ENCODE measurements at regions of chr1 and their contacts with region 1.

Region 1: GRCh38 chr1:229625915-229626831 is at the starts of genes TAF5L and URB2:
- DNase-seq: peak; percentile 78 to 87
- H3K4me3 ChIP-seq: peak within 1 kb of the TSS; percentile 81 to 97
- H3K27ac ChIP-seq: peak within 1 kb of the TSS; percentile 94 to 96
- H3K4me1 ChIP-seq: peaks cover 9 to 15% of the 10 kb centered on the region in 2 donors
- H3K27me3 ChIP-seq: no peaks in the 10 kb centered on the region
- CTCF ChIP-seq: peak in 2 of 4 experiments; percentile 11 to 44
- POLR2A ChIP-seq: peak in 1 of 2 donors; percentile 52
- total RNA-seq, gene TAF5L: 0.88 to 22.2 (median 9.2) TPM
- total RNA-seq, gene URB2: 2.3 to 17.8 (median 8.6) TPM

Region 2: GRCh38 chr1:229558571-229559335 is 67.4 kb before region 1 on chr1 and contains the start of gene ABCB10:
- intact Hi-C with region 1: loop called (anchors 5 kb)
- DNase-seq: peak; percentile 94 to 97
- H3K4me3 ChIP-seq: peak within 1 kb of the TSS; percentile 42 to 61
- H3K27ac ChIP-seq: peak within 1 kb of the TSS; percentile 82 to 86
- H3K4me1 ChIP-seq: peaks cover 0 to 9% of the 10 kb centered on the region in 2 donors
- H3K27me3 ChIP-seq: no peaks in the 10 kb centered on the region
- CTCF ChIP-seq: peak; percentile 79 to 89 (median 85)
- POLR2A ChIP-seq: peak; percentile 70
- total RNA-seq, gene ABCB10: 4.7 to 26.8 (median 15.4) TPM

Region 3: GRCh38 chr1:229699613-229700267 is 73.6 kb after region 1 on chr1:
- intact Hi-C with region 1: no loop called
- DNase-seq: no peak
- H3K4me3 ChIP-seq: no peak overlapping the region
- H3K27ac ChIP-seq: no peak overlapping the region
- H3K4me1 ChIP-seq: no peaks in the 10 kb centered on the region
- H3K27me3 ChIP-seq: no peaks in the 10 kb centered on the region
- CTCF ChIP-seq: no peak
- POLR2A ChIP-seq: no peak

Measured in uterus (tissue), 4 donors.